ENCODE measurements at regions of chr2 and their contacts with region 1.

Region 1: GRCh38 chr2:11224887-11225286 is 69.6 kb downstream of the SLC66A3 start:
- DNase-seq: no peak
- H3K4me3 ChIP-seq: no peak overlapping the region
- H3K27ac ChIP-seq: no peak overlapping the region
- H3K4me1 ChIP-seq: peaks cover 16% of the 10 kb centered on the region
- H3K27me3 ChIP-seq: no peaks in the 10 kb centered on the region
- CTCF ChIP-seq: no peak

Region 2: GRCh38 chr2:12965540-12966269 is 1740.8 kb after region 1 on chr2:
- intact Hi-C with region 1: loop called (anchors 10 kb)
- DNase-seq: no peak
- H3K4me3 ChIP-seq: no peak overlapping the region
- H3K27ac ChIP-seq: no peak overlapping the region
- H3K4me1 ChIP-seq: peaks cover 12% of the 10 kb centered on the region
- H3K27me3 ChIP-seq: no peaks in the 10 kb centered on the region
- CTCF ChIP-seq: no peak

Measured in left ventricle myocardium inferior (tissue), 1 donor.